CD14-positive monocyte (primary cell): ENCODE measurements at regions of chr11 and their contacts with region 1.

Region 1: GRCh38 chr11:34405079-34405858 is 33.5 kb upstream of the CAT start:
- DNase-seq: peak; percentile 87 to 94 (median 93)
- H3K4me3 ChIP-seq: peak overlapping the region; percentile 44 to 82 (median 70)
- H3K4me3 Mint-ChIP-seq: peak overlapping the region; percentile 85 to 90
- H3K27ac ChIP-seq: peak overlapping the region in 1 of 2 donors; percentile 77
- H3K27ac Mint-ChIP-seq: peak overlapping the region; percentile 84 to 93 (median 90)
- H3K4me1 ChIP-seq: peaks cover 8 to 18% of the 10 kb centered on the region in 2 donors
- H3K4me1 Mint-ChIP-seq: peaks cover 27% of the 10 kb centered on the region
- H3K27me3 ChIP-seq: no peaks in the 10 kb centered on the region
- H3K27me3 Mint-ChIP-seq: peaks cover 0 to 1% (median 0%) of the 10 kb centered on the region in 3 donors
- CTCF ChIP-seq: no peak

Region 2: GRCh38 chr11:34357701-34358257 is 47.5 kb before region 1 on chr11 and contains the start of gene ABTB2:
- intact Hi-C with region 1: no loop called
- DNase-seq: peak; percentile 93 to 95 (median 93)
- H3K4me3 ChIP-seq: peak within 1 kb of the TSS; percentile 55 to 86 (median 81)
- H3K4me3 Mint-ChIP-seq: peak within 1 kb of the TSS; percentile 82 to 97
- H3K27ac ChIP-seq: peak within 1 kb of the TSS in 1 of 2 donors; percentile 40
- H3K27ac Mint-ChIP-seq: peak within 1 kb of the TSS in 6 of 7 donors; percentile 26 to 70 (median 63)
- H3K4me1 ChIP-seq: peaks cover 30 to 39% of the 10 kb centered on the region in 2 donors
- H3K4me1 Mint-ChIP-seq: peaks cover 33% of the 10 kb centered on the region
- H3K27me3 ChIP-seq: peaks cover 13 to 18% of the 10 kb centered on the region in 2 donors
- H3K27me3 Mint-ChIP-seq: peaks cover 22 to 43% (median 27%) of the 10 kb centered on the region in 3 donors
- CTCF ChIP-seq: no peak
- polyA plus RNA-seq, gene ABTB2: 0.25 to 1.7 (median 0.26) TPM

Region 3: GRCh38 chr11:34454308-34455032 is 49.2 kb after region 1 on chr11:
- intact Hi-C with region 1: loop called in 1 of 2 experiments (anchors 10 kb)
- DNase-seq: no peak
- H3K4me3 ChIP-seq: no peak overlapping the region
- H3K4me3 Mint-ChIP-seq: no peak overlapping the region
- H3K27ac ChIP-seq: peak overlapping the region in 1 of 2 donors; percentile 8
- H3K27ac Mint-ChIP-seq: no peak overlapping the region
- H3K4me1 ChIP-seq: peaks cover 27 to 30% of the 10 kb centered on the region in 2 donors
- H3K4me1 Mint-ChIP-seq: peaks cover 28% of the 10 kb centered on the region
- H3K27me3 ChIP-seq: no peaks in the 10 kb centered on the region
- H3K27me3 Mint-ChIP-seq: no peaks in the 10 kb centered on the region
- CTCF ChIP-seq: no peak